K562 (cell line): ENCODE measurements at regions of chr3 and their contacts with region 1.

Region 1: DNA sequence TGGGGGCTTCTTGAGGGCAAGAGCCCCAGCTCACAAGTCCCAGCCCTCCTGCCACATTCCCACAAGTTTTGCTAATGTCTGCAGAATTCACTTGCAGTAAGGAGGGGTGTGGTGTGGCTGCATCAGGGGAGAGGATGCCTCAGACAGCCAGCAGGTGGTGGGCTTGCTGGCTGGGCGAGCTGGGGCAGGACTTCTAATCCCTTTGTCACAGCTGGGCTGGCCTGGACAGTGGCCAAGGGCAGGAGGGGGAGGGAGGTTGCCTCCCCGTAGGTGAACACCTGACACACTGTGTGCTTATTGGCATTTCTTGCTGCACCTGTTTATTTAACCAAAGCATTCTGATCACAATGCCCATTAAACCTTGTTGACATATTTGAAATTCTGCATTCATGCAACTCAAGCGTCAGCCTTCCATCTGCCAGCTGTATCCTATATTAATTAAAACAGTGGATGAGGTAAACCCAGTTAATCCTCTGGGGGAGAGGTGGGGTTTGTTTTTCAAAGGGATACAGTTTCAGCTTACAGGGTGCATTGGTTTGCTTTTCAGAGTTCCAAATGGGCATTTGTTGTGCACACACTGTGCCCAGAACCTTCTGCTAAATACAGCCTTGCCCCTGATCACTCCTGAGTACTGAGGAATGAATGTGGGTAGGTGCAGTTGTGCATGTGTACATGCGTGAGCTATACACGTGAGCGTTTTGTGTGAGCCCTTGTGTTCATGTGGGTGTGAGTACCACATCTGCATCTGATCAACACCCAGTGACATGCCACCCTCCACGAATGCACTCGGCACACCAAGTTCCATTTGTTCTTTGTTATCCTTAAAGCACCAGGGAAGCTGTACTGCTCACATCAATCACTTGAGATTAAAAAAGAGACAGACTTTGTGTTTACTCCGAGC is 268.7 kb downstream of the XXYLT1 start:
- DNase-seq: peak; percentile 72 to 81 (median 76)
- ATAC-seq: peak; percentile 97
- H3K4me3 ChIP-seq: no peak overlapping the region
- H3K27ac ChIP-seq: no peak overlapping the region
- H3K4me1 ChIP-seq: peaks cover 3 to 14% of the 10 kb centered on the region in 2 experiments; a peak in 4 of 5 replicates
- H3K27me3 ChIP-seq: peaks cover 23 to 62% of the 10 kb centered on the region in 2 experiments
- CTCF ChIP-seq: peak; percentile 76 to 81 (median 80)
- EP300 ChIP-seq: no peak
- POLR2A ChIP-seq: no peak
- RAD21 ChIP-seq: peak; percentile 81 to 89

Region 2: GRCh38 chr3:195106418-195106906 is 104.3 kb after region 1 on chr3:
- CTCF ChIA-PET with region 1: interaction called, 4 read pairs
- POLR2A ChIA-PET with region 1: no interaction called
- in situ Hi-C with region 1: no loop called
- intact Hi-C with region 1: loop called (anchors 1 kb)
- DNase-seq: peak; percentile 78 to 89 (median 82)
- ATAC-seq: peak; percentile 95
- H3K4me3 ChIP-seq: no peak overlapping the region
- H3K27ac ChIP-seq: no peak overlapping the region
- H3K4me1 ChIP-seq: peaks cover 14 to 15% of the 10 kb centered on the region in 2 experiments
- H3K27me3 ChIP-seq: no peaks in the 10 kb centered on the region
- CTCF ChIP-seq: peak; percentile 85 to 89 (median 88)
- EP300 ChIP-seq: no peak
- POLR2A ChIP-seq: no peak
- RAD21 ChIP-seq: peak; percentile 87 to 90

Region 3: DNA sequence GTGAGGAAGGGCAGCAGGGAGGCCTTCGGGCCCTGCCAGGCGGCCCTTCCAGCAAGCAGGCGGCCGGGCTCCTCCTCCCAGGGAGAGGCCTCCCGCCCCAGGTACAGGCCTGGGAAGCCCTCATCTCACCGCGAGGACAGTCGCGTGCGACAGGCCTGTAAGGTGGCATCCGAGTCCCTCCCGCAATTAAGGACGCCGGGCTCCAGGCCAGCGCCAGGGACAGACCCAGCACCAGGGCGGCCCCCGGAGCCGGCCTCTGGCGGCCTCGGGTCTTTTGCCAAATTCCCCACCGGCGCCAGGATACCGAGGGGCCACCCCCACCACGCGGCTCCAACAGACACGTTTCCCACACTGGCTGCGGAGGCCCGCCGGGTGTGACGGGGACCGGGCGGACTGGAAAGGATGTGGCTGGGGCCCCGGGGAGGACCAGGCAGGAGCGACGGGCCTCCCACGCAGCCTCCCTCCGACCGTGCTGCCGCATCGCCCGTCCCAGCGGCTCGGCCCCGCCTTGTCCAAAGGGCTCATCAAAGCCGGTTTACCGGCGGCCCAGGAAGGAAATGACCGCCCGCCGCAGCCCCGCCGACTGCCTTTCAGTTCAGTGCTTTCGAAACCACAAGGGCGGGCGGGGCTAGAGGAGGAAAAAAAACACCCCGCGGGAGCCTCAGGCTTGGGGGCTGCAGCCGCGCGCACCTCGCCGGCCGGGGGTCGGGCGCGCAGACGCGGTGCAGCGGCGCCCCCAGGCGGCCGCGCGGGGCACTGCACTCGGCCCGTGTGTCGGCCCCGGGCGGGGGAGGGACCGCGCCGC is 257.5 kb after region 1 on chr3:
- CTCF ChIA-PET with region 1: interaction called, 12 read pairs
- POLR2A ChIA-PET with region 1: interaction called, 3 read pairs
- in situ Hi-C with region 1: no loop called
- intact Hi-C with region 1: loop called (anchors 1 kb)
- DNase-seq: peak; percentile 91 to 97 (median 95)
- ATAC-seq: peak; percentile 90
- H3K4me3 ChIP-seq: peak overlapping the region; percentile 55
- H3K27ac ChIP-seq: peak overlapping the region; percentile 89
- H3K4me1 ChIP-seq: peaks cover 14 to 41% of the 10 kb centered on the region in 2 experiments
- H3K27me3 ChIP-seq: no peaks in the 10 kb centered on the region
- CTCF ChIP-seq: peak; percentile 46 to 73 (median 68); a peak in 5 of 6 replicates
- EP300 ChIP-seq: no peak; the same call in 1 of the 2 replicates
- POLR2A ChIP-seq: no peak; the same call in none of the 2 replicates
- RAD21 ChIP-seq: peak; percentile 90 to 96